CD4-positive, alpha-beta T cell (primary cell): ENCODE measurements at regions of chr9 and their contacts with region 1.

Region 1: GRCh38 chr9:109574068-109574882 is 76.2 kb upstream of the PTPN3 start:
- DNase-seq: peak in 4 of 14 experiments; percentile 5 to 20 (median 16)
- ATAC-seq: no peak
- H3K4me3 ChIP-seq: no peak overlapping the region
- H3K4me3 Mint-ChIP-seq: no peak overlapping the region
- H3K27ac ChIP-seq: no peak overlapping the region
- H3K27ac Mint-ChIP-seq: no peak overlapping the region
- H3K4me1 ChIP-seq: no peaks in the 10 kb centered on the region
- H3K4me1 Mint-ChIP-seq: no peaks in the 10 kb centered on the region
- H3K27me3 ChIP-seq: no peaks in the 10 kb centered on the region
- H3K27me3 Mint-ChIP-seq: peaks cover 7% of the 10 kb centered on the region
- CTCF ChIP-seq: peak; percentile 44

Region 2: GRCh38 chr9:109534151-109534550 is 40.1 kb before region 1 on chr9:
- CTCF ChIA-PET with region 1: no interaction called
- POLR2A ChIA-PET with region 1: no interaction called
- intact Hi-C with region 1: no loop called
- DNase-seq: no peak
- ATAC-seq: no peak
- H3K4me3 ChIP-seq: no peak overlapping the region
- H3K4me3 Mint-ChIP-seq: no peak overlapping the region
- H3K27ac ChIP-seq: no peak overlapping the region
- H3K27ac Mint-ChIP-seq: no peak overlapping the region
- H3K4me1 ChIP-seq: no peaks in the 10 kb centered on the region
- H3K4me1 Mint-ChIP-seq: no peaks in the 10 kb centered on the region
- H3K27me3 ChIP-seq: no peaks in the 10 kb centered on the region
- H3K27me3 Mint-ChIP-seq: peaks cover 13% of the 10 kb centered on the region
- CTCF ChIP-seq: no peak

Region 3: GRCh38 chr9:109616571-109617120 is 42.4 kb after region 1 on chr9:
- CTCF ChIA-PET with region 1: no interaction called
- POLR2A ChIA-PET with region 1: no interaction called
- intact Hi-C with region 1: no loop called
- DNase-seq: no peak
- ATAC-seq: no peak
- H3K4me3 ChIP-seq: no peak overlapping the region
- H3K4me3 Mint-ChIP-seq: no peak overlapping the region
- H3K27ac ChIP-seq: no peak overlapping the region
- H3K27ac Mint-ChIP-seq: no peak overlapping the region
- H3K4me1 ChIP-seq: no peaks in the 10 kb centered on the region
- H3K4me1 Mint-ChIP-seq: no peaks in the 10 kb centered on the region
- H3K27me3 ChIP-seq: no peaks in the 10 kb centered on the region
- H3K27me3 Mint-ChIP-seq: peaks cover 37% of the 10 kb centered on the region
- CTCF ChIP-seq: no peak

Region 4: DNA sequence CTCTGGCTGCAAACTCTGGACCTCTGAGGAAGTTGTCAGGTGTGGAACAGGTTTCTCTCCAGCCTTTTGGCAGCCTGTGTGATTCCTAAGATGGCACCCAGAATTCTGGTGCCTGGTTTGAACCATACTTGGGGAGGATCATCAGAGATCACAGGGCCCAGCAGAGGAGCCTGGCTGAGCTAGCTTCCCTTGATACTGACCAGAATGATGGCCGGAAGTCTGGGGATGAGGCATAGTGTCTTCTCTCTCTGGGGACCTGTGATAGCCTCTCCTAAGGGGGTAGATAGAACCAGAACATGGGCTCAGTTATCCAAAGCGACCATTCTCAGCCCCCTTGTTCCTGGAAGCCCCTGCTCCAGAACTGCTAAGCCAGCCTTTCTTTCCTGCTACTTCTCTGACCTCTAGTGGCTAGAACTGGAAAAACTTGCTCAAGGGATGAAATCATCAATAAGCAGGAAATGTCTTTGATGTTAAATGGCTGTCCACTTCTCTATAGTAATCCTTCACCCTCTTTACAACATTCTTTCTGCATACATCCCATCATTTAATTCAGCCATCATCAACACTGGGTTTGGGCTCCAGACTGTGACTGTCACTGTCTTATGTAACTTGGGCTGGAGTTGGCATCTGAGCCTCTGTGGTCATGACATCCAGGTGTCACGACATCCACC is 578.6 kb after region 1 on chr9:
- CTCF ChIA-PET with region 1: no interaction called
- POLR2A ChIA-PET with region 1: no interaction called
- intact Hi-C with region 1: loop called (anchors 5 to 10 kb)
- DNase-seq: peak in 3 of 14 experiments; percentile 58 to 66 (median 63)
- ATAC-seq: no peak
- H3K4me3 ChIP-seq: no peak overlapping the region
- H3K4me3 Mint-ChIP-seq: no peak overlapping the region
- H3K27ac ChIP-seq: no peak overlapping the region
- H3K27ac Mint-ChIP-seq: no peak overlapping the region
- H3K4me1 ChIP-seq: peaks cover 43% of the 10 kb centered on the region
- H3K4me1 Mint-ChIP-seq: peaks cover 80% of the 10 kb centered on the region
- H3K27me3 ChIP-seq: no peaks in the 10 kb centered on the region
- H3K27me3 Mint-ChIP-seq: no peaks in the 10 kb centered on the region
- CTCF ChIP-seq: peak; percentile 71

Region 5: GRCh38 chr9:111298731-111299598 is 1724.7 kb after region 1 on chr9:
- CTCF ChIA-PET with region 1: no interaction called
- POLR2A ChIA-PET with region 1: no interaction called
- intact Hi-C with region 1: loop called in 1 of 2 experiments (anchors 10 kb)
- DNase-seq: peak in 3 of 14 experiments; percentile 34 to 53 (median 43)
- ATAC-seq: no peak
- H3K4me3 ChIP-seq: no peak overlapping the region
- H3K4me3 Mint-ChIP-seq: no peak overlapping the region
- H3K27ac ChIP-seq: no peak overlapping the region
- H3K27ac Mint-ChIP-seq: no peak overlapping the region
- H3K4me1 ChIP-seq: no peaks in the 10 kb centered on the region
- H3K4me1 Mint-ChIP-seq: no peaks in the 10 kb centered on the region
- H3K27me3 ChIP-seq: no peaks in the 10 kb centered on the region
- H3K27me3 Mint-ChIP-seq: peaks cover 21% of the 10 kb centered on the region
- CTCF ChIP-seq: peak; percentile 78